ENCODE measurements at regions of chr11 and their contacts with region 1.

Region 1: DNA sequence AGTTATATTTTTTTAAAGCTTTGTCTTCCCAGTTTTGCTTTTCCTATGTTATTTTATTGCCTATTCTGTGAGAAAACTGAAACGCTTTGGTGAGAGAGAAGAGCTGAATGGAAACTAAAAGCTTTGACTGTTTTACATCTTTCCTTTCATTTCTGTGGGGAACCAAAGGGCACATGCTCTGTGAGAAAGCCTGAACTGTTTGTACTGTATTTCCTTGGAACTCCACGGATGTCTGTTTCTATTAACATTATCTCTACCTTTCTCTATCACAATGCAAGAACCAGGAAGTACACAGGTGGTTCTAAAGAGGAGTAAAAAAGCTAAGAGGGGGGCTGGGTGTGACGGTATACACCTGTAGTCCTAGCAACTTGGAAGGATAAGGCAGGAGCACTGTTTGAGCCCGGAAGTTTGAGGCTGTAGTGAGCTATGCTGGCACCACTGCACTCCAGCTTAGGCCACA is 43.8 kb downstream of the CELF1 start:
- DNase-seq: peak in 3 of 35 experiments; percentile 4 to 13 (median 13)
- ATAC-seq: peak; percentile 31 to 69 (median 48)
- H3K4me3 ChIP-seq: no peak overlapping the region
- H3K4me3 Mint-ChIP-seq: peak overlapping the region in 2 of 3 donors; percentile 22 to 45
- H3K27ac ChIP-seq: no peak overlapping the region
- H3K27ac Mint-ChIP-seq: peak overlapping the region; percentile 56 to 73
- H3K4me1 ChIP-seq: peaks cover 35 to 42% of the 10 kb centered on the region in 2 experiments
- H3K4me1 Mint-ChIP-seq: peaks cover 76 to 84% (median 83%) of the 10 kb centered on the region in 3 donors
- H3K27me3 ChIP-seq: no peaks in the 10 kb centered on the region
- H3K27me3 Mint-ChIP-seq: no peaks in the 10 kb centered on the region

Region 2: GRCh38 chr11:47305734-47306483 is 203.2 kb before region 1 on chr11:
- CTCF ChIA-PET with region 1: no interaction called
- POLR2A ChIA-PET with region 1: interaction called in 1 of 2 experiments, 11 read pairs
- DNase-seq: no peak
- ATAC-seq: no peak
- H3K4me3 ChIP-seq: no peak overlapping the region
- H3K4me3 Mint-ChIP-seq: no peak overlapping the region
- H3K27ac ChIP-seq: no peak overlapping the region
- H3K27ac Mint-ChIP-seq: no peak overlapping the region
- H3K4me1 ChIP-seq: no peaks in the 10 kb centered on the region
- H3K4me1 Mint-ChIP-seq: peaks cover 0 to 6% (median 5%) of the 10 kb centered on the region in 3 donors
- H3K27me3 ChIP-seq: no peaks in the 10 kb centered on the region
- H3K27me3 Mint-ChIP-seq: no peaks in the 10 kb centered on the region